ENCODE measurements at regions of chr4 and their contacts with region 1.

Region 1: GRCh38 chr4:2811830-2812611 is 19.1 kb downstream of the SH3BP2 start:
- DNase-seq: peak; percentile 58 to 77
- ATAC-seq: peak; percentile 57 to 78 (median 62)
- H3K4me3 ChIP-seq: peak overlapping the region; percentile 88
- H3K4me3 Mint-ChIP-seq: peak overlapping the region; percentile 81
- H3K27ac ChIP-seq: peak overlapping the region; percentile 84
- H3K27ac Mint-ChIP-seq: peak overlapping the region; percentile 98 to 99
- H3K4me1 ChIP-seq: peaks cover 84% of the 10 kb centered on the region
- H3K4me1 Mint-ChIP-seq: peaks cover 49 to 74% of the 10 kb centered on the region in 2 donors
- H3K27me3 ChIP-seq: no peaks in the 10 kb centered on the region
- H3K27me3 Mint-ChIP-seq: no peaks in the 10 kb centered on the region
- CTCF ChIP-seq: no peak

Region 2: DNA sequence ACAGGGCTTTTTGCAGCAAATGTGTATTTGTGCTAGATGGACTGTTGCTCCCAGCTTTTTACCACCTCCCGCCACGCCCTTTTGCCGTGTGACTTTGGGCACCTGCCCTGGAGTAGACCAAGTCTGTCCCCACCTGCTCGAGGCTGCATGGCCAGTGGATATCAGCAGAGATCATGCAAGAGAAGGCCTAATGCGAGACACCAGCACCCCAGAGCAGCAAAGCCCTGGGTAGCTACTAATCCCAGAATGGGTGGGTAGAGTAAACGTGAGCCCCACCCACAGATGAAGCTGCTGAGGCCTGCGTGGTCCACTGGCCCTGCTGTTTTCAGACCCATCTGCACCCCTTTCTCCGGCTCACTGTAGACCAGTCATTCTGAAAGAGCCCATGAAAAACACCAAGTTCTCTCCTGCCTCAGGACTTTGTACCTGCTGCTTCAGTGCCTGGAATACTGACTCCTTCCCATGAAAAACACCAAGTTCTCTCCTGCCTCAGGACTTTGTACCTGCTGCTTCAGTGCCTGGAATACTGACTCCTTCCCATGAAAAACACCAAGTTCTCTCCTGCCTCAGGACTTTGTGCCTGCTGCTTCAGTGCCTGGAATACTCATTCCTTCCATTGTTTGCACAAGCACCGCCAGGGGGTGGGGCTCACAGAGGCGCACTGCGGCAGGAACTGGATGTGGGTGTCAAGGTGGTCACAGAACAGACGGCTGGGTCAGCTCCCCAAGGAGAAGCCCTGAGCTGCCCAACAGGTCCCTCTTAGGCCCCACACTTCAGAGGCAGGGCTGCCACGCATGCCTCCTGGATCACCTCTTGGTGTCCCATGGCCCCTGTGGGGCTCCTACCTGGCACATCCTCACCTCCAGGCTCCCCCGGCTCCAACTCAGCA is 50.7 kb before region 1 on chr4:
- intact Hi-C with region 1: loop called (anchors 5 kb)
- DNase-seq: no peak
- ATAC-seq: no peak
- H3K4me3 ChIP-seq: no peak overlapping the region
- H3K4me3 Mint-ChIP-seq: no peak overlapping the region
- H3K27ac ChIP-seq: no peak overlapping the region
- H3K27ac Mint-ChIP-seq: no peak overlapping the region
- H3K4me1 ChIP-seq: peaks cover 20% of the 10 kb centered on the region
- H3K4me1 Mint-ChIP-seq: peaks cover 8 to 14% of the 10 kb centered on the region in 2 donors
- H3K27me3 ChIP-seq: no peaks in the 10 kb centered on the region
- H3K27me3 Mint-ChIP-seq: no peaks in the 10 kb centered on the region
- CTCF ChIP-seq: no peak

Region 3: GRCh38 chr4:2837904-2838496 is 26.0 kb after region 1 on chr4:
- intact Hi-C with region 1: loop called (anchors 1 kb)
- DNase-seq: peak; percentile 68 to 91
- ATAC-seq: peak; percentile 89 to 94 (median 89)
- H3K4me3 ChIP-seq: peak overlapping the region; percentile 18
- H3K4me3 Mint-ChIP-seq: peak overlapping the region; percentile 87
- H3K27ac ChIP-seq: peak overlapping the region; percentile 77
- H3K27ac Mint-ChIP-seq: peak overlapping the region; percentile 84 to 88
- H3K4me1 ChIP-seq: peaks cover 80% of the 10 kb centered on the region
- H3K4me1 Mint-ChIP-seq: peaks cover 76 to 87% of the 10 kb centered on the region in 2 donors
- H3K27me3 ChIP-seq: no peaks in the 10 kb centered on the region
- H3K27me3 Mint-ChIP-seq: no peaks in the 10 kb centered on the region
- CTCF ChIP-seq: no peak

Region 4: GRCh38 chr4:2871911-2872310 is 59.9 kb after region 1 on chr4:
- intact Hi-C with region 1: loop called (anchors 10 kb)
- DNase-seq: peak in 1 of 2 donors; percentile 38
- ATAC-seq: peak; percentile 63 to 69 (median 64)
- H3K4me3 ChIP-seq: no peak overlapping the region
- H3K4me3 Mint-ChIP-seq: peak overlapping the region; percentile 30
- H3K27ac ChIP-seq: peak overlapping the region; percentile 40
- H3K27ac Mint-ChIP-seq: peak overlapping the region; percentile 81
- H3K4me1 ChIP-seq: peaks cover 40% of the 10 kb centered on the region
- H3K4me1 Mint-ChIP-seq: peaks cover 68 to 73% of the 10 kb centered on the region in 2 donors
- H3K27me3 ChIP-seq: no peaks in the 10 kb centered on the region
- H3K27me3 Mint-ChIP-seq: no peaks in the 10 kb centered on the region
- CTCF ChIP-seq: no peak

Region 5: DNA sequence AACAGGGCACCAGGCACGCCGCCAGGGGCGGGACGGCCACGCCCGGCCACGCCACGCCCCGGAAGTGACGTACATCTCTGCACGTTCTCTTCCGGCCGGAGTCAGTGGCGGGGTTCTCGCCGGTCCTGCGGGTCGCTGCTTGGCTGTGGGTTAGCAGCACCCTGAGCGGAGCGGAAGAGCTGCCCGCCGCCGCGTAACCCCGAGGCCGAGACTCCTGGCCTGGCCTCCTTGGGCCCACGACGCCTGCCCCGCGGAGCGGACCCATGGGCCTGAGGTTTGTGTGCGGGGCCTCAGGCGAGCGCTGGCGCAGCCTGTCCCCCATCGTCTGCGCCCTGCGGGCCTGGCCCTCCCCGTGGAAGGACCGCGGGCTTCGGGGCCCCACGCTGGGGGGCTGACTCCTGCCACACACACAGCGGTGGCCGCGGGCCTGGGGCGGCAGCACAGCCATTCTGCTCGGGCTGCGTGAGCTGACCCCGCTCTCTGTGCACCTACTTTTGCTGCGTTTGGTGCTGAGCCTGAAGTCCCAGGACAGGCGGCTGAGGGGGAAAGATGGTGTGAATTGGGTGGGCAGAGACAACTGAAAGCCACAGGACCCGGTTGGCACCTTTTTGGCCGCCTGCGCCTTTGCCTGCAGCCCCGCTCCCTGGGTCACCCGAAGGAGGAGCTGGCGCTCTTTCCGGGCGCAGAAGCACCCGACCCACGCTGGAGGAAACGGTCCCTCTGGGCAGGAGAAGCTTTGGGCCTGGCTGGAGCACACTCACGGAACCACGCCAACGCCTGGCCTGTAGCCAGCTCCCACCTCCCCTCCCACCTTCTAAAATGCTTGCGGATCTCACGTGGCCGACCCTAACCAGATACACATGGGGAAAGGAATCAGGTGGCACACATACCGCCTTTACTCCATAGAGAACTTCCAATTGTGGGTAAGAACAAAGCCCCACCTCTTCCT is 123.1 kb after region 1 on chr4:
- intact Hi-C with region 1: loop called (anchors 10 kb)
- DNase-seq: peak; percentile 98
- ATAC-seq: peak; percentile 78 to 86 (median 83)
- H3K4me3 ChIP-seq: peak overlapping the region; percentile 55
- H3K4me3 Mint-ChIP-seq: peak overlapping the region; percentile 78
- H3K27ac ChIP-seq: peak overlapping the region; percentile 65
- H3K27ac Mint-ChIP-seq: peak overlapping the region; percentile 71 to 83
- H3K4me1 ChIP-seq: peaks cover 60% of the 10 kb centered on the region
- H3K4me1 Mint-ChIP-seq: peaks cover 39 to 44% of the 10 kb centered on the region in 2 donors
- H3K27me3 ChIP-seq: no peaks in the 10 kb centered on the region
- H3K27me3 Mint-ChIP-seq: no peaks in the 10 kb centered on the region
- CTCF ChIP-seq: no peak

Measured in natural killer cell (primary cell).